Colonic mucosa (tissue), 4 donors: ENCODE measurements at regions of chr7 and their contacts with region 1.

Region 1: DNA sequence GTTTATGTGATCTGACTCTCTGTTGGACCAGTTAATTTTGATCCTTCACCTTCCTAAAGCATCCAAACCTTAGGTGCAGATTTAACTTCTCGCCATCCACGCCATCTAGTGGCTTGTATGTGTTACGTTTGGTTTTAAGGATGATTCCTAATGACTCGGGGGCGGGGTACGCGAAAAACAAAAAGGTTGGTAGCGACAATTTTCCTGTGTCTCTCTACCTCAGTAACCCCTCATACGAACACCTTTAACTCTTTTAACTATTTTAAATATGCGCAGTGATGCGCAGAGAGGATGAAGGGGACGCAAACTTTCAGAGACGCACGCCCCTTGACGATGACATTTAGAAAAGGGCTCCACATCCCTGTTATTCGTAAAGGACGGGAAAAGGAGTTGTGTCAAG is 714 bp upstream of the KCND2 start:
- DNase-seq: no peak
- H3K4me3 ChIP-seq: peak overlapping the region; percentile 1
- H3K27ac ChIP-seq: no peak overlapping the region
- H3K4me1 ChIP-seq: no peaks in the 10 kb centered on the region
- H3K27me3 ChIP-seq: peaks cover 16% of the 10 kb centered on the region
- CTCF ChIP-seq: peak; percentile 21

Region 2: DNA sequence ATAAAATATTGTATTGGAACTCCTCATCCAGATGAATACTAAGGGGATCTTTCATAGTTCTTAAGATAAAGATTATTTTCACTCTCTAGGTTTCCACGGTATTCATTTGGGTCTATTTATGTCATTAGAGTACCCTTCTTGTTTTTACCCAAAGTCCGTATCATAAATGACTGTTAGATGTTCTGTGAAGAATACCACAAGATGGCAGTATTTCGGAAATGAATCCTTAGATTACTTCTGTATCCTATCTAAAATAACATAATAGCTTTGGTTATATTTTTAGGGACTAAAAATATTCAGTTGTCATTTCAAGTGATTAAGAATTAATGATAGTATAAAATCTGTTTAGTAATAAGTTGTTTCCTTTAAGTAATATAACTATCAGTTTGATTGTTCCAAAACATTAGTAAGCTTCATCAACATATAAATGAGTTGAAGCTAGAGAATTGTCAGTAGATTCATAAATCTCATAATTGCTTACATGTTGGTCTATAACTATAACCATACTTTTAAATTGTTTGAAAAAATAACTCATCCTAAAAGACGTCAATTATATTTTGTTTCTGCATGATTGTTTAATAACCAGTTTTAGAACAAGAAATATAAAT is 336.7 kb before region 1 on chr7:
- intact Hi-C with region 1: loop called (anchors 10 kb)
- DNase-seq: no peak
- H3K4me3 ChIP-seq: no peak overlapping the region
- H3K27ac ChIP-seq: no peak overlapping the region
- H3K4me1 ChIP-seq: no peaks in the 10 kb centered on the region
- H3K27me3 ChIP-seq: no peaks in the 10 kb centered on the region
- CTCF ChIP-seq: no peak